IMR-90 (cell line): ENCODE measurements at regions of chr19 and their contacts with region 1.

Region 1: GRCh38 chr19:19538061-19538784 is at the start of gene CILP2:
- DNase-seq: no peak
- ATAC-seq: peak; percentile 52
- H3K4me3 ChIP-seq: no peak within 1 kb of the TSS
- H3K27ac ChIP-seq: no peak within 1 kb of the TSS
- H3K4me1 ChIP-seq: no peaks in the 10 kb centered on the region; the same call in 1 of the 2 replicates
- H3K27me3 ChIP-seq: peaks cover 25% of the 10 kb centered on the region
- CTCF ChIP-seq: no peak
- POLR2A ChIP-seq: no peak
- RAD21 ChIP-seq: no peak
- total RNA-seq, gene CILP2: 0.18 and 0.28 TPM in 2 replicates

Region 2: DNA sequence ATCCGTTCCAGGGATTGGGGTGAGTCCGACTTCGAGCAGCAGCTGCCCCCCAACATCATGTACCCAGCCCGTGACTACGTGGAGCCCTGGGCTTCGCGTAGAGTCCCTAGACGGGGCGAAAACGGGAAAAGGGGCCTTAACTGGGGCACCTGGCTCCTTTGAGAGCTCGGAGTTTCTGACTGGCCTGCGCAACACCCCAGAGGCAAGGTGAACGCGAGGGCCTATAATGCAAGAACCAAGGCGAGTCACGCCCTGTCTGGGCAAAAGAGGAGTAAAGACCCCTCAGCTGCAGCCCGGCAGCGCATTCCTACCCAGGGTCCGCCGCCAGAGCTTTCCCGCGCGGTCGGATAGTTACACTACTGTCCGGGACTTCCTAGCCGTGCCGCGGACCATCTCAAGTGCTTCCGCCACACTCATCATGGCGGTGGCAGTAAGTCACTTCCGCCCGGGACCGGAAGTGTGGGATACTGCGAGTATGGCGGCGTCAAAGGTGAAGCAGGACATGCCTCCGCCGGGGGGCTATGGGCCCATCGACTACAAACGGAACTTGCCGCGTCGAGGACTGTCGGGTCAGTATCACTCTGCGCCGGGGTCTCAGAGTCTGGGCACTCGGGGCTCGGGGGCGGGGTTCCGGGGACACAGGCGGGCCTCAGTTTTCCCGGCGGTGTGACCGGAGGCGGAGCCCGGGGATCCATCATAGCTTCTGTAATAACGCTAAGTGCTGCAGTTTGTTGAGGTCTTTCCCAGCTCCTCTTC is 22.3 kb before region 1 on chr19 and contains the start of gene NDUFA13:
- CTCF ChIA-PET with region 1: no interaction called
- POLR2A ChIA-PET with region 1: interaction called, 11 read pairs
- dilution Hi-C with region 1: no loop called
- in situ Hi-C with region 1: no loop called
- intact Hi-C with region 1: no loop called
- DNase-seq: peak; percentile 90
- ATAC-seq: peak; percentile 92
- H3K4me3 ChIP-seq: peak within 1 kb of the TSS; percentile 60
- H3K27ac ChIP-seq: peak within 1 kb of the TSS; percentile 81
- H3K4me1 ChIP-seq: peaks cover 5% of the 10 kb centered on the region; the same call in 1 of the 2 replicates
- H3K27me3 ChIP-seq: no peaks in the 10 kb centered on the region
- CTCF ChIP-seq: no peak
- POLR2A ChIP-seq: peak; percentile 72
- RAD21 ChIP-seq: no peak
- total RNA-seq, gene NDUFA13: 30.6 and 33.6 TPM in 2 replicates

Region 3: GRCh38 chr19:19591133-19591825 is 53.1 kb after region 1 on chr19:
- CTCF ChIA-PET with region 1: no interaction called
- POLR2A ChIA-PET with region 1: no interaction called
- dilution Hi-C with region 1: no loop called
- in situ Hi-C with region 1: no loop called
- intact Hi-C with region 1: no loop called
- DNase-seq: peak; percentile 99
- ATAC-seq: peak; percentile 92
- H3K4me3 ChIP-seq: no peak overlapping the region
- H3K27ac ChIP-seq: peak overlapping the region; percentile 80
- H3K4me1 ChIP-seq: peaks cover 19% of the 10 kb centered on the region
- H3K27me3 ChIP-seq: no peaks in the 10 kb centered on the region
- CTCF ChIP-seq: no peak
- POLR2A ChIP-seq: no peak
- RAD21 ChIP-seq: no peak

Region 4: GRCh38 chr19:19719798-19720197 is 181.6 kb after region 1 on chr19:
- CTCF ChIA-PET with region 1: no interaction called
- POLR2A ChIA-PET with region 1: no interaction called
- dilution Hi-C with region 1: no loop called
- in situ Hi-C with region 1: no loop called
- intact Hi-C with region 1: no loop called
- DNase-seq: no peak
- ATAC-seq: no peak
- H3K4me3 ChIP-seq: no peak overlapping the region
- H3K27ac ChIP-seq: no peak overlapping the region
- H3K4me1 ChIP-seq: no peaks in the 10 kb centered on the region
- H3K27me3 ChIP-seq: no peaks in the 10 kb centered on the region
- CTCF ChIP-seq: no peak
- POLR2A ChIP-seq: no peak
- RAD21 ChIP-seq: no peak